Activated CD4-positive, alpha-beta memory T cell treated with anti-CD3 and anti-CD28 coated beads for 36 hours (primary cell): ENCODE measurements at regions of chrX and their contacts with region 1.

Region 1: DNA sequence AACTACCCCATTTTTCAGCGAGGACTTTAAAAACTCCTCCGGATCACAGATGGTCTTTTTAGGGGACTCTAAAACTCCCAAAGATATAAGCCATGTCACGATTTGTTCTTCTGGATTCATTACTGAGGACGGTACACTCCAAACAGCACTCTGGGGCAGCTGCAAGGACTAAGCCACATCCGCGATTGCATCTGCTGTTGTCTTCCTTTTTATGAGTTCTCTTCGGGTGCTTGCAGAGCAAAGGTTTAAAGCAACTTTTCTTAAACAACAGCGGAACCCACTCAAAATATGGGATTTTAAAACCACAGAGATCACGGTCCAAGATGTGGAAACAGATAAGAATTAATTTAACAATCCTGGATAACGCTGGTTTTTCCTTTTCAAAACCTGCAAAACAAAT is at the start of gene ARHGEF6:
- DNase-seq: peak; percentile 53
- H3K4me3 Mint-ChIP-seq: peak within 1 kb of the TSS; percentile 83
- H3K27ac Mint-ChIP-seq: peak within 1 kb of the TSS; percentile 96
- H3K4me1 Mint-ChIP-seq: peaks cover 58% of the 10 kb centered on the region
- H3K27me3 Mint-ChIP-seq: no peaks in the 10 kb centered on the region
- total RNA-seq, gene ARHGEF6: 52.7 to 54.1 TPM

Region 2: DNA sequence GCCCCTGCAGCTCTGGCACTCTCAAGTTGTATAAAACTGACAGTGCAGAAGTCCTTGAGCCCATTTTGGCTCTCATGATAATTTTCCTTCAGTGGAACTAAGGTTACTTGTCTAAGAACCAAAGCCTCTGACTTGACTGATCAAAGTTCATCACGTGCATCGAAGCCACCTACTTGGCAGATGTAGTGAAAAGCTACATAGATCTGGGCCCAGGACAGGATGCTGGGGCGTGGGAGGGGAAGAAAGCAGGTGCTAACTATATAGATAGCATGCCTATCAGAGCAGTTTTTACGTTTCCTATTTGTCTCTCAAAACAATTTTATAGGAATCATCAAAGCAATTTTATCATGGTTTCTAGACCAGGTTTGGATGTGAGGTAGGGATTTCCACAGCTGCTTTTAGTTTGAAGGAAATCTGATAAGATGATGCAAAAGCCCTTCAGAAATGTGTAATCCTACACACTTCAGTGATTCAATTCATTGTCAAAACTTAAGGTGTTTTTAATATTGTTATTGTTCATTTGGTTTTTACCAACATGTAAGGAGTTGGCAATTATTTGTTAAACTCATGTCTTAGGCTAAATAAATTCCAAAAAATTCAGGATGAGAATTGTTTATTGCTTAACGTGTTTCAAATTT is 134.0 kb before region 1 on chrX:
- CTCF ChIA-PET with region 1: no interaction called
- POLR2A ChIA-PET with region 1: no interaction called
- intact Hi-C with region 1: loop called (anchors 5 kb)
- DNase-seq: peak; percentile 78
- H3K4me3 Mint-ChIP-seq: peak overlapping the region; percentile 93
- H3K27ac Mint-ChIP-seq: peak overlapping the region; percentile 99
- H3K4me1 Mint-ChIP-seq: peaks cover 53% of the 10 kb centered on the region
- H3K27me3 Mint-ChIP-seq: no peaks in the 10 kb centered on the region

Region 3: DNA sequence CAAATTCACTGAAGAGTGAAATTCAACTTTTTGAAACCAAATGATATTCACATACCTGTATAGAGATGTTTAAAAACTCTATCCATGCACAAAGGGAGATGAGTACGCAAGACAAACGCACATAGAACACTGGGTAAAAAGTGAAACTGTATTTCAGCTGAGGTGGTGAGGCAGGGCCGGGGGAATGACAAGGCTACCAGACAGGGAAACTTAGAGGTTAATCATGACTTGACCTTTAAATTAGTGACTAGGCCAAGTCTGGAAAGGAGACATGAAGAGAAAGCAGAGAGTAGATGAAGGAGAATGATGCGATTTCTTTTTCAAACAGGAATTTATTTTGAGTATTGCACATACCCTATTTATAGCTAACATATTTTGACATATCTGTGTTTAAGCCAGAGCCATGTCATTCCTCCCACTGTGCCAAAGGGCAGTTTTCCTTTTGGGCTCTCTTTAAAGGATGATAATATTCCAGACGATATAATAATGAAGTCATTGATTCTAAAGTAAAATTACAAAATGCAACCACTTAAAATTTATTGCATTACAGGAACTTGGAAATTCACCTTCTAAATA is 49.5 kb before region 1 on chrX:
- CTCF ChIA-PET with region 1: no interaction called
- POLR2A ChIA-PET with region 1: interaction called, 3 read pairs
- intact Hi-C with region 1: loop called (anchors 5 kb)
- DNase-seq: peak; percentile 53
- H3K4me3 Mint-ChIP-seq: peak overlapping the region; percentile 6
- H3K27ac Mint-ChIP-seq: peak overlapping the region; percentile 56
- H3K4me1 Mint-ChIP-seq: peaks cover 57% of the 10 kb centered on the region
- H3K27me3 Mint-ChIP-seq: no peaks in the 10 kb centered on the region

Region 4: GRCh38 chrX:136767104-136767941 is 13.4 kb before region 1 on chrX:
- CTCF ChIA-PET with region 1: no interaction called
- POLR2A ChIA-PET with region 1: interaction called, 22 read pairs
- intact Hi-C with region 1: loop called (anchors 1 kb)
- DNase-seq: peak; percentile 55
- H3K4me3 Mint-ChIP-seq: peak overlapping the region; percentile 76
- H3K27ac Mint-ChIP-seq: peak overlapping the region; percentile 87
- H3K4me1 Mint-ChIP-seq: peaks cover 54% of the 10 kb centered on the region
- H3K27me3 Mint-ChIP-seq: no peaks in the 10 kb centered on the region

Region 5: DNA sequence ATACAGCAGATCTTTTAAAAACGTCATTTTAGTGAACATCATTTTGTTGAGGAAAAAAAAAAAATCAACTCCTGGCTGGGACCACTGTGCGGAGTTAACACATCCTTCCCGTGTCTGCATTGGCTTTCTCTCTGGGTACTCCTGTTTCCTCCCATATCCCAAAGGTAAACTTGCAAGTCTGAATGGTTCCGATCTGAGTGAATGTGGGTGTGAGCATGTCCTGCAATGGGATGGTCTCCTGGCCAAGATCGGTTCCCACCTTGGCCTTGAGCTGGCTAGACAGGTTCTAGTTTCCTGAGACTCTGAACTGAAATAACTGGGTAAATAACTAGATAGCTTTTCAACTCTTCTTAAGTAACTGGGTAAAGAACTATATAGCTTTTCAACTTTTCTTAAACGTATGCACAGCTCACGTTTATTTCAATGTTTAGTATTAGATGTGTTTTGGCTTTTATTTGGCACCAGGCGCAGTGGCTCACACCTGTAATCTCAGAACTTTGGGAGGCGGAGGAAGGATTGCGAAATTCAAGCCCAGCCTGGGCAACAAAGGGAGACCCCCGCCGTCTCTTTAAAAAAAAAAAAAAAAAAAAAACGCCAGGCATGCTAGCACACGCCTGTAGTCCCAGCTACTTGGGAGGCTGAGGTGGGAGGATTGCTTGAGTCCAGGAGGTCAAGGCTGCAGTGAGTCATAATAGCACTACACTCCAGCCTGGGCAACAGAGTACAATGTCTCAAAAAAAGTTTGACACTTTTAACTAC is 85.8 kb after region 1 on chrX:
- CTCF ChIA-PET with region 1: no interaction called
- POLR2A ChIA-PET with region 1: interaction called, 11 read pairs
- intact Hi-C with region 1: no loop called
- DNase-seq: no peak
- H3K4me3 Mint-ChIP-seq: no peak overlapping the region
- H3K27ac Mint-ChIP-seq: peak overlapping the region; percentile 77
- H3K4me1 Mint-ChIP-seq: peaks cover 65% of the 10 kb centered on the region
- H3K27me3 Mint-ChIP-seq: no peaks in the 10 kb centered on the region

Region 6: DNA sequence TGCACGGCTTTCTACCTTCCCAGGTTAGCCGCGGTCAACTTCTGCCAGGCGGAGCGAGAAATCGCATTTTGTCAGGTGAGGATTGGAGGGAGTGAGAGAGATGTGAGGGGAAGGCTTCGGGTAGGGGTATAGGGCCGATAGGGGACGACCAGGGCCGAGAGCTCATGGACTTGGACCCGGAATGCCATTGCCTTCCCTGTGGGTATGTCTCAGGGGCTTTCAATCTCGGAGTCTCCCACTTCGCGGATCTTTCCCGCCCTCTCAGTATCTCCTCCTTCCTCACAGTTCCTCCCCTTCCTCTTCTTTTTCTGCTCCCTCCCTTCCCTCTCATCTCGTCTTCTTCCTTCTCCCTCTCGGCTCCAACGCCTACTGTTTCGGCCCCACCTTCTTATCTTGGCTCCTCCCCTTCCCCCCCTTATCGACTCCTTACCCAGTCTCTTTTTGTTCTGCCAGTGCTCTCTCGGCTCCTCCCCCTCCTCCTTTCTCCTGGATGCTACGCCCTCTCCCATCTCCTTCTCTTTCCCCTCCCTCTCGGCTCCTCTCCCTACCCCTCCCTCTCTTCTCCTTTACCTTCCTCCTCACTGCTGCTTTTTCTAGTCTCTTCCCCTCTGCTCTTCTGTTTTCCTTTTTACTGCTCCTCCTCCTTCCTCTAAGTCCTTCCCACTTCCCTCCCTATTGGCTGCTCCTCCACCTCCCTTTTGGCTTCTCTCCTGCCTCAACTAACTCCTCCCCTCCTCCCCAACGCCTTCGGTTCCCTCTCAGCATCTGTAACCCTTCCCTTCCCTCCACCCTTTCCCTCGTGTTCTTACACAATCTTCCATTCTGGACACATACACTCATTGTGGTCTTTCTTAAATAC is 129.2 kb after region 1 on chrX:
- CTCF ChIA-PET with region 1: no interaction called
- POLR2A ChIA-PET with region 1: no interaction called
- intact Hi-C with region 1: loop called (anchors 1 kb)
- DNase-seq: peak; percentile 78
- H3K4me3 Mint-ChIP-seq: peak overlapping the region; percentile 91
- H3K27ac Mint-ChIP-seq: peak overlapping the region; percentile 90
- H3K4me1 Mint-ChIP-seq: peaks cover 15% of the 10 kb centered on the region
- H3K27me3 Mint-ChIP-seq: no peaks in the 10 kb centered on the region